Natural killer cell (primary cell): ENCODE measurements at regions of chr1 and their contacts with region 1.

Region 1: DNA sequence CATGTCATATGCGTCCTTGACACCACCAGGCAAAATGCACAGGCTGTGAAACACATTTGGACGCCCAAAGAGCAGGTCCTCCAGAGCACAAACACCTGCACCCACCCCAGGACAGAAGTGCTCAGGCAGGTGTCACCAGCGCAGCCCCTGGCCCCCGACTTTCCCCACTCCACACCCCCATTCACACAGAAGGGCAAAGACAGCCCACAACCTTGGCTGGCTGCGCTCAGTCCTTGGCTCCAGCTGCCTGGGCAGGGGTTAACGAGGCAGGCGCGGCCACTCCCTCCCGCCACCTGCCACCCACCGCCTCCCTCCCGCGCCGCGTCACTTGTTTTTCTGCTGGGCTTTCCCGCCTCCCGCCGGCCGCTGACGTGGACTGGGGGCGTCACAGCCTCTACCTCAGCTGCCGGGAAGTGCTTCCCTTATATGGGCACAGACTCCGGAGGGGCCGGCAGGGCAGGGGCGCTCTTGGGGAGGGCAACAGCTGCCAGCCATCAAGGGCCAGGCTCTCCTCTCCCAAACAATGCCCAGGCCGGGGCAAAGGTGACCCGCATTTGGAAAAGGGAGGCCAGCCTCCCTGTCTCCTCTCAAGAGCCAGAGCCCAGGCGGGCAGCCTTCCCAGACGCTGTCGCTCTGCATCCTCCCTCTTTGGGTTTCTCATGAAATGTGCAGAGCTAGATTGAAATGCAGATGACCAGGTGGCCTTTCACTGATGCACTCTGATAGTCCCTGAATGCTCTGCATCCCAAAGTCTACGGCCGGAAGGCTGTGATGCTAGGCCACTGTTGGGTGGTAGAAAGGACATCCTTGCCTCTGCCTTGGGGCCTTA is 14.8 kb upstream of the BTG2 start:
- DNase-seq: peak; percentile 97 to 98
- ATAC-seq: peak; percentile 58 to 76 (median 64)
- H3K4me3 ChIP-seq: peak overlapping the region; percentile 21
- H3K4me3 Mint-ChIP-seq: peak overlapping the region; percentile 81
- H3K27ac ChIP-seq: peak overlapping the region; percentile 98
- H3K27ac Mint-ChIP-seq: peak overlapping the region; percentile 99
- H3K4me1 ChIP-seq: peaks cover 66% of the 10 kb centered on the region
- H3K4me1 Mint-ChIP-seq: peaks cover 69 to 70% of the 10 kb centered on the region in 2 donors
- H3K27me3 ChIP-seq: no peaks in the 10 kb centered on the region
- H3K27me3 Mint-ChIP-seq: no peaks in the 10 kb centered on the region
- CTCF ChIP-seq: no peak

Region 2: GRCh38 chr1:202844931-202845330 is 445.5 kb before region 1 on chr1:
- intact Hi-C with region 1: no loop called
- DNase-seq: no peak
- ATAC-seq: no peak
- H3K4me3 ChIP-seq: no peak overlapping the region
- H3K4me3 Mint-ChIP-seq: no peak overlapping the region
- H3K27ac ChIP-seq: no peak overlapping the region
- H3K27ac Mint-ChIP-seq: no peak overlapping the region
- H3K4me1 ChIP-seq: no peaks in the 10 kb centered on the region
- H3K4me1 Mint-ChIP-seq: no peaks in the 10 kb centered on the region
- H3K27me3 ChIP-seq: no peaks in the 10 kb centered on the region
- H3K27me3 Mint-ChIP-seq: no peaks in the 10 kb centered on the region
- CTCF ChIP-seq: no peak

Region 3: GRCh38 chr1:203101915-203102634 is 188.4 kb before region 1 on chr1:
- intact Hi-C with region 1: no loop called
- DNase-seq: no peak
- ATAC-seq: no peak
- H3K4me3 ChIP-seq: no peak overlapping the region
- H3K4me3 Mint-ChIP-seq: no peak overlapping the region
- H3K27ac ChIP-seq: no peak overlapping the region
- H3K27ac Mint-ChIP-seq: no peak overlapping the region
- H3K4me1 ChIP-seq: no peaks in the 10 kb centered on the region
- H3K4me1 Mint-ChIP-seq: no peaks in the 10 kb centered on the region
- H3K27me3 ChIP-seq: peaks cover 3% of the 10 kb centered on the region
- H3K27me3 Mint-ChIP-seq: peaks cover 12 to 31% of the 10 kb centered on the region in 2 donors
- CTCF ChIP-seq: no peak

Region 4: DNA sequence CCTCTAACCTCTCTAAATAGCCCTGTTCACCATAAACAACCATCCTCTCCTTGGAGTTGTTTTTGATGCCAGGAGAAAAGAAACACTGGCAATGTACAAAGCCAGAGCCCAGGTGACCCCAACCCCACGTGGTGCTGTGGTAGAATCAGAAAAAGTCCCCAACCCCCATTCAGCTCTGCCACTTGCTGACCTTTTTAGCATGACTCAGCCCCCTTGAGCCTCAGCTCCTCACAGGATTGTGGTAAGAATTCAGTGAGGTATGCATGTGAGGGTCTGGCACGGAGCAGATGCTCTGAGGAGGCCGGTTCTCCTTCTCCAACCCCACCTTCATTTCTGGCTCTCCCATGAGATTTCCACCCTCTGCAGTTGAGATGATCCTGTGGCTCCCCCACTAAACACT is 92.8 kb before region 1 on chr1:
- intact Hi-C with region 1: no loop called
- DNase-seq: no peak
- ATAC-seq: no peak
- H3K4me3 ChIP-seq: no peak overlapping the region
- H3K4me3 Mint-ChIP-seq: no peak overlapping the region
- H3K27ac ChIP-seq: no peak overlapping the region
- H3K27ac Mint-ChIP-seq: no peak overlapping the region
- H3K4me1 ChIP-seq: peaks cover 5% of the 10 kb centered on the region
- H3K4me1 Mint-ChIP-seq: no peaks in the 10 kb centered on the region
- H3K27me3 ChIP-seq: no peaks in the 10 kb centered on the region
- H3K27me3 Mint-ChIP-seq: peaks cover 22 to 24% of the 10 kb centered on the region in 2 donors
- CTCF ChIP-seq: no peak

Region 5: GRCh38 chr1:203273206-203273868 is 17.1 kb before region 1 on chr1:
- intact Hi-C with region 1: loop called (anchors 1 kb)
- DNase-seq: peak; percentile 88 to 95
- ATAC-seq: peak; percentile 82 to 90 (median 84)
- H3K4me3 ChIP-seq: peak overlapping the region; percentile 32
- H3K4me3 Mint-ChIP-seq: peak overlapping the region; percentile 52
- H3K27ac ChIP-seq: peak overlapping the region; percentile 39
- H3K27ac Mint-ChIP-seq: peak overlapping the region; percentile 60 to 80
- H3K4me1 ChIP-seq: peaks cover 50% of the 10 kb centered on the region
- H3K4me1 Mint-ChIP-seq: peaks cover 7 to 23% of the 10 kb centered on the region in 2 donors
- H3K27me3 ChIP-seq: no peaks in the 10 kb centered on the region
- H3K27me3 Mint-ChIP-seq: no peaks in the 10 kb centered on the region
- CTCF ChIP-seq: peak; percentile 96

Region 6: DNA sequence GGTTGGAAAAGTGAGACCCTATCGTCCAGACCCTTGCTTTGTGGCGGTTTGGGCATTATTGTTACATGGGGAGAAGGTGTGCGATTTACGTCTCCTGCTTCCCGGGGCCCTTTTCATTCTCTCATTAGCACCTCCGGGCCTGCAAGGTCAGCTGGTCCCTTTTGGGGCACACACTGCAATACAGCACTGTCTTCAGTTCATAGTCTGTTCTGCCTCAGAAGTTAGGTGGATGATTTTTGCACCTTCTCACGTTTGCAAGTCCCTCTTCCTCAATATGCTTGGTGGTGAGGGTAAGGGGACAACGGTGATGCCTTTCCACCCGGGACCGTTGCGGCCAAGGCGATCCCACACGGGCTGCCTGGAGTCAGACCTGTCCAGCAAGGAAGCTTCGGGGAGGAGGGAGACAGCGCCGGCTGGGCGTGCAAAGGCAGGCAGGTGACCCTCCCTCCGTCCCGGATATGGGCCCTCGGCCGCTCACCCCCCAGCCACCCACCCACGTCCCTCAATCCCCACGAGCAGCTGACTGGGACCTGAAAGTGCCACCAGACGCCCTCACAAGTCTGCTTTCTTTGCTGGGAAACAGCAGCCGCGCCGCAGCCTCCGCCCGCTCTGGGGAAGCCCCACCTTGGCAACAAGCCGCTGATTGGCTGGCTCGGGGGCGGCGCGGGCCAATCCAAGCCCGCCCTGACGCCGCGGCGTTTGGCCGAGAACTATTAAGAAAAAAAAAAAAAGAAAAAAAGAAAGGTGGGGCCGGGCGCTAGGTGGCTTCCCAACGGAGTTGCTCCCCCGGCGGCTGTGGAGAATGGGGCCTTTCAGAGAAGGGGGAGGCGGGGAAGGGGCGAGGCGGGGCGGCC is 36.6 kb after region 1 on chr1:
- intact Hi-C with region 1: loop called (anchors 1 kb)
- DNase-seq: peak; percentile 96 to 97
- ATAC-seq: peak; percentile 74 to 91 (median 80)
- H3K4me3 ChIP-seq: peak overlapping the region; percentile 37
- H3K4me3 Mint-ChIP-seq: peak overlapping the region; percentile 82
- H3K27ac ChIP-seq: peak overlapping the region; percentile 95
- H3K27ac Mint-ChIP-seq: peak overlapping the region; percentile 94 to 99
- H3K4me1 ChIP-seq: peaks cover 64% of the 10 kb centered on the region
- H3K4me1 Mint-ChIP-seq: peaks cover 64 to 67% of the 10 kb centered on the region in 2 donors
- H3K27me3 ChIP-seq: no peaks in the 10 kb centered on the region
- H3K27me3 Mint-ChIP-seq: no peaks in the 10 kb centered on the region
- CTCF ChIP-seq: no peak

Region 7: DNA sequence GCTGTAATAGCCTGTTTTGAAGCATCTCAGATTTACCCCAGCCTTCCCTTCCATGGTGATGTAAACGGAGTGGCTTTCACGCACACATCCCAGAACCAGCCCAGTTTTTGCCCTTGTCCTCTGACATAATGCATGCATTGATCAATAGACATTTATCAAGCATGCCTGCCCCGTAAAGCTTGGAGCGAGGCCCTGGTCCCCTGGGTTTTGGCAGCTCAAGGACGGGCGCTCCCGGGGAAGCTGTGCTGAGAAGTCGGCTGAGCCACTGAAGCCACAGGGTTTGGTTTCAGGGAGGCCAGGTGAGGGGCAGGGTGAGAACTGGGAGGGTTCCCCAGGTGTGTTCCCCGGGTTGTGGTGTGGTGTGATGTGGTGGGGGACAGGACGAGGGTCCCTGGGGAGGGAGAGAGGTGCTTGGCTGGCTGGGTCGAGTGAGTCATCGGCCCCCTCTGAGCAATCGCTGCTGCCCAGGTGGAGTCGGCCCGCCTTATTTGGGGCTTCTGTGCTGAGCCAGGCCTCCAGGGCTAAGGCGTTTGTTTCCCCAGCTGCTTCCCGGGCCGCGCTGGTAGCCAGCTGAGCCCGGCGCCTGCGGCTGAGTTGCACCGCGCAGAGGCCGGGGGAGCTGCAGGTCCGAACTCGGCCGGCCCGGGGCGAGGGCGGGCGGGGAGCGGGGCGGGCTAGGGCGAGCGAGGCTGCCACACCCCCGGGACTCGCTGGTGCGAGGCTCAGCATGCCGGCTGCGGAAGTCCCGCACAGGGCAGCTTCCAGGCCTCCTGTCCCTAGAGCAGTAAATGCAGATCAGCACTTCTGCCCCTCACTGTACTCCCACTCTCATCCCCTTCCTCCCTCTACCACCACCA is 359.8 kb after region 1 on chr1:
- intact Hi-C with region 1: loop called (anchors 10 kb)
- DNase-seq: peak; percentile 68 to 79
- ATAC-seq: peak; percentile 40 to 59 (median 42)
- H3K4me3 ChIP-seq: peak overlapping the region; percentile 26
- H3K4me3 Mint-ChIP-seq: peak overlapping the region; percentile 86
- H3K27ac ChIP-seq: peak overlapping the region; percentile 89
- H3K27ac Mint-ChIP-seq: peak overlapping the region; percentile 89 to 99
- H3K4me1 ChIP-seq: peaks cover 76% of the 10 kb centered on the region
- H3K4me1 Mint-ChIP-seq: peaks cover 66 to 70% of the 10 kb centered on the region in 2 donors
- H3K27me3 ChIP-seq: no peaks in the 10 kb centered on the region
- H3K27me3 Mint-ChIP-seq: no peaks in the 10 kb centered on the region
- CTCF ChIP-seq: no peak

Region 8: DNA sequence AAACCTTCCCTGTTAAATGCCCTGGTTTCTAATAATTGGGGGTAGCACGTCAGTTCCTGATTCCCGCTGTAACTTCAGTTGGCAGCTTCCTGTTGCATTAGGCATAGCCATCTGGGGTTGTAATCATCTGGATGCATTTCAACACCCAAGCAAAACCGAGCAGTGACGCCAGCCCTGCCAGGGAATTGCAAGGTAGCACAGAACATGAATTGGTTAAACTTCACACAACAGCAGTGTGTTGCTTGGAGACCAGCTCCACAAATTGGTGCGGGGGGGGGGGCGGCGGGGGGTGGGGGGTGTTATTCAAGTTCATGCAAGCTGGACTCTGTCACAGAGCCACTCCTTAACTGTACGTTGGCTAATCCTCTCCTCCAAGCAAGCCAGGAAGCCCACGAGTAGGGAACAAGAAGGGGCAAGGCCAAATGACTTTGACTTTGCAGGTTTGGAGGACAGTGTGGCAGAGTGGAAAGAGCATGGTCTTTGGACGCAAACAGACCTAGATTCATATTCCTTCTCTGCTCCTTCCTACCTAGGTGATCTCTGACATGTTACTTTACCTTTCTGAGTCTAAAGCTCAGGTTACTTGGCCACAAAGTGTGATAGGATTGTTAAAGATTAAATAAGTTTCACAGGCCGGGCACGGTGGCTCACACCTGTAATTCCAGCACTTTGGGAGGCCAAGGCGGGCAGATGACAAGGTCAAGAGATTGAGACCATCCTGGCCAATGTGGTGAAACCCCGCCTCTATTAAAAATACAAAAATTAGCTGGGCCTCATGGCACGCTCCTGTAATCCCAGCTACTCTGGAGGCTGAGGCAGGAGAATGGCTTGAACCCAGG is 479.2 kb after region 1 on chr1:
- intact Hi-C with region 1: loop called (anchors 5 kb)
- DNase-seq: peak in 1 of 2 donors; percentile 26
- ATAC-seq: peak in 2 of 3 donors; percentile 9 to 24
- H3K4me3 ChIP-seq: no peak overlapping the region
- H3K4me3 Mint-ChIP-seq: peak overlapping the region; percentile 71
- H3K27ac ChIP-seq: peak overlapping the region; percentile 42
- H3K27ac Mint-ChIP-seq: peak overlapping the region; percentile 71 to 86
- H3K4me1 ChIP-seq: peaks cover 43% of the 10 kb centered on the region
- H3K4me1 Mint-ChIP-seq: peaks cover 46 to 49% of the 10 kb centered on the region in 2 donors
- H3K27me3 ChIP-seq: no peaks in the 10 kb centered on the region
- H3K27me3 Mint-ChIP-seq: no peaks in the 10 kb centered on the region
- CTCF ChIP-seq: no peak